WTC11 (cell line): ENCODE measurements at regions of chr1 and their contacts with region 1.

Region 1: GRCh38 chr1:157739229-157739901 is 37.6 kb downstream of the FCRL2 start:
- DNase-seq: peak; percentile 24
- ATAC-seq: peak; percentile 93
- H3K4me3 Mint-ChIP-seq: no peak overlapping the region
- H3K27ac Mint-ChIP-seq: no peak overlapping the region
- H3K4me1 Mint-ChIP-seq: no peaks in the 10 kb centered on the region
- H3K27me3 Mint-ChIP-seq: no peaks in the 10 kb centered on the region
- CTCF ChIP-seq: no peak

Region 2: GRCh38 chr1:157715736-157716135 is 23.6 kb before region 1 on chr1:
- CTCF ChIA-PET with region 1: no interaction called
- POLR2A ChIA-PET with region 1: no interaction called
- DNase-seq: no peak
- ATAC-seq: no peak
- H3K4me3 Mint-ChIP-seq: no peak overlapping the region
- H3K27ac Mint-ChIP-seq: no peak overlapping the region
- H3K4me1 Mint-ChIP-seq: no peaks in the 10 kb centered on the region
- H3K27me3 Mint-ChIP-seq: no peaks in the 10 kb centered on the region
- CTCF ChIP-seq: no peak

Region 3: GRCh38 chr1:157751283-157751682 is 11.9 kb after region 1 on chr1:
- CTCF ChIA-PET with region 1: interaction called, 19 read pairs
- POLR2A ChIA-PET with region 1: no interaction called
- DNase-seq: no peak
- ATAC-seq: peak; percentile 66
- H3K4me3 Mint-ChIP-seq: no peak overlapping the region
- H3K27ac Mint-ChIP-seq: no peak overlapping the region
- H3K4me1 Mint-ChIP-seq: peaks cover 28% of the 10 kb centered on the region
- H3K27me3 Mint-ChIP-seq: no peaks in the 10 kb centered on the region; the same call in 1 of the 2 replicates
- CTCF ChIP-seq: no peak

Region 4: DNA sequence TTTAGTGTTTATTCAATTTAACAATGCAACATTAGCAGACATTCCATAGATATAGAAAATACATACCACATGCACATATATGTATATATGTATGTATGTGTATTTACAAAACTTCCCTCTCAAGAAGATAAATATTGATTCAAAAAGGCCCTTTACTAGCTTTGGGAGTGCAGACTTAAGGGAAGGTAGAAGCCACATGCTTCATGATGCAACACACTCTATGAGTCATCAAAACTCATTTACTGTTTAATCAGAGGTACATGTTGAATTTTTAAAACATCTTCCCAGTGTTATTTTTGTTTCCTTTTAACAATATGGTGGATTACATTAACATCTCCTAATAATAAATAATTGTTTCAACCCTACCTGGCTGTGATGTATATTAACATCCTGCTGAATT is 192.7 kb after region 1 on chr1:
- CTCF ChIA-PET with region 1: no interaction called
- POLR2A ChIA-PET with region 1: no interaction called
- DNase-seq: no peak
- ATAC-seq: no peak
- H3K4me3 Mint-ChIP-seq: no peak overlapping the region
- H3K27ac Mint-ChIP-seq: no peak overlapping the region
- H3K4me1 Mint-ChIP-seq: no peaks in the 10 kb centered on the region
- H3K27me3 Mint-ChIP-seq: peaks cover 3% of the 10 kb centered on the region
- CTCF ChIP-seq: no peak